ENCODE measurements at regions of chr1 and their contacts with region 1.

Region 1: GRCh38 chr1:246931549-246932365 is at the start of gene AHCTF1:
- DNase-seq: peak; percentile 97
- ATAC-seq: peak; percentile 86
- H3K4me3 ChIP-seq: peak within 1 kb of the TSS; percentile 85 to 96 (median 88)
- H3K4me3 Mint-ChIP-seq: peak within 1 kb of the TSS; percentile 98
- H3K27ac ChIP-seq: peak within 1 kb of the TSS; percentile 87 to 93
- H3K27ac Mint-ChIP-seq: peak within 1 kb of the TSS; percentile 98
- H3K4me1 ChIP-seq: peaks cover 12 to 18% of the 10 kb centered on the region in 2 donors
- H3K4me1 Mint-ChIP-seq: peaks cover 33% of the 10 kb centered on the region
- H3K27me3 ChIP-seq: no peaks in the 10 kb centered on the region
- H3K27me3 Mint-ChIP-seq: no peaks in the 10 kb centered on the region
- CTCF ChIP-seq: no peak
- total RNA-seq, gene AHCTF1: 34.8 and 43.1 TPM in 2 replicates

Region 2: GRCh38 chr1:245448975-245449431 is 1482.8 kb before region 1 on chr1:
- CTCF ChIA-PET with region 1: no interaction called
- POLR2A ChIA-PET with region 1: no interaction called
- intact Hi-C with region 1: no loop called
- DNase-seq: no peak
- ATAC-seq: no peak
- H3K4me3 ChIP-seq: no peak overlapping the region
- H3K4me3 Mint-ChIP-seq: no peak overlapping the region
- H3K27ac ChIP-seq: no peak overlapping the region
- H3K27ac Mint-ChIP-seq: no peak overlapping the region
- H3K4me1 ChIP-seq: no peaks in the 10 kb centered on the region
- H3K4me1 Mint-ChIP-seq: no peaks in the 10 kb centered on the region
- H3K27me3 ChIP-seq: no peaks in the 10 kb centered on the region
- H3K27me3 Mint-ChIP-seq: peaks cover 3% of the 10 kb centered on the region
- CTCF ChIP-seq: no peak

Region 3: DNA sequence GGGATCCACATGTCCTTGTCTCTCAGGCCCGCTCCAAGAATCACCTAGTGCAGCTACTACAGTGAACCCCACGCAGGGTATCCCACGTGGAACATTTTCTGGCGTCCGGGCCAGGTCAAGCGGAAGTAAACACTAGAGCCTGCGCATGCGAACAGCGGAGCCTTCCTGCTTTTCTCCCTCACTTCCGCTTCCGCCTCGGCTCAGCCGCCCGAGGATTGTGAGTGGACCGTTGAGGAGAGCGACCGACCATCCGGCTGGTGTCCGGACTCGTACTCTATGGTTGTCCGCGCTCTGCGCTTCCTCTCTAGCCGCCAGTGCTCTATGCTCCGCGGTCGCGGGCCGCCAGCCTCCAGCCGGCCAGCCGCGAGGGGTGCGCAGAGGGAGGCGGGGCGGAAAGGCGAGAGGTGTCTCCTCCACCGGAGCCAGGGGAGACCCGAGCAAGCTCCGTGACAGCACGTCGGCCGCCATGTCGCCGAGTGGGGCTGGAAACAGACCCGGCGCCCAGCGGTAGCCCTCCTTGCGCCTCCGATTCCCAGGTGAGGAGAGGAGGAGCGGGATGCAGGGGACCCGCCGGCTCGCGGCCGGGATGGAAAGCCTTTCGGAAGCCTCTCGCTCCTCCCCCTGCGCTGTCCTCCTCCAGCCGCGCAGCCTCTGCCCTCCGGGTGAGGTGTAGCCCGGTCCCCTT is 365.5 kb before region 1 on chr1 and contains the starts of genes CNST and TFB2M:
- CTCF ChIA-PET with region 1: no interaction called
- POLR2A ChIA-PET with region 1: no interaction called
- intact Hi-C with region 1: loop called (anchors 2 kb)
- DNase-seq: peak; percentile 98
- ATAC-seq: peak; percentile 90
- H3K4me3 ChIP-seq: peak within 1 kb of the TSS; percentile 70 to 100 (median 95)
- H3K4me3 Mint-ChIP-seq: peak within 1 kb of the TSS; percentile 98
- H3K27ac ChIP-seq: peak within 1 kb of the TSS; percentile 83 to 95
- H3K27ac Mint-ChIP-seq: peak within 1 kb of the TSS; percentile 94
- H3K4me1 ChIP-seq: peaks cover 50 to 53% of the 10 kb centered on the region in 2 donors
- H3K4me1 Mint-ChIP-seq: peaks cover 45% of the 10 kb centered on the region
- H3K27me3 ChIP-seq: no peaks in the 10 kb centered on the region
- H3K27me3 Mint-ChIP-seq: no peaks in the 10 kb centered on the region
- CTCF ChIP-seq: no peak
- total RNA-seq, gene CNST: 54.0 and 54.6 TPM in 2 replicates
- total RNA-seq, gene TFB2M: 11.6 and 14.7 TPM in 2 replicates

Region 4: GRCh38 chr1:246827392-246827791 is 104.4 kb before region 1 on chr1:
- CTCF ChIA-PET with region 1: no interaction called
- POLR2A ChIA-PET with region 1: no interaction called
- intact Hi-C with region 1: no loop called
- DNase-seq: no peak
- ATAC-seq: no peak
- H3K4me3 ChIP-seq: no peak overlapping the region
- H3K4me3 Mint-ChIP-seq: no peak overlapping the region
- H3K27ac ChIP-seq: no peak overlapping the region
- H3K27ac Mint-ChIP-seq: no peak overlapping the region
- H3K4me1 ChIP-seq: no peaks in the 10 kb centered on the region
- H3K4me1 Mint-ChIP-seq: no peaks in the 10 kb centered on the region
- H3K27me3 ChIP-seq: no peaks in the 10 kb centered on the region
- H3K27me3 Mint-ChIP-seq: peaks cover 7% of the 10 kb centered on the region
- CTCF ChIP-seq: no peak

Region 5: DNA sequence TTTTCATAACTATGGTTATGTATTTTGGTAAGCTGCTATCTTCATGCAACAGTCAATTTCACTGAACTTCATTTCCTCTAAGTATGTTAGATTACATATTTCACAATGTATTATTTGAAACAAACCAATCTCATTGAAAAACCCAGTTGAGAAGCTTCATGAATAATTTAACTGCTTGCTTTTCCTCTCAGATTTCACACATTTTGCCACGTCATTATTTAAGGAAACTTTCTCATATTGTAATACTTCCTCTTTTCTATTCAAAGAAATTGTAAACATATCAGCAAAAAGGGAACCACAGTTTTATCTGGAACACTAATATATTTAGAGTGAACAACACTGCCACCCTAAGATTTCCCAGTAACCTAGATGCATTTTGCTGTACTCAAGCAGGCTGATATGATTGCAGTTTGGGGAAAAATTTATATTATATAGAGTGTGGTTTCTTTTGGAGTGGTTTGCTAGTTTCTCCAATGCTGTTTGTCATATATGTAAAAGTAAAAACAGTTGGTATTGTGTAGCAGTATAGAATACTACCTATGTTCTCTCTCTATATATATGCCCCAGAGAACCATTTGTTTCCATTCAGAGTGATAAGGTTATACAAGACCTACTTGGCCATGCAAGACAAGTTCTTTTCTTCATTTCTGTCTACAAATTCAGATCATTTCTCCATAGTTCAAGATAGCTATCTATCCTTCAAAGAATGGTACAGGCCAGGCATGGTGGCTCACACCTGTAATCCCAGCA is 28.4 kb after region 1 on chr1:
- CTCF ChIA-PET with region 1: interaction called, 5 read pairs
- POLR2A ChIA-PET with region 1: no interaction called
- intact Hi-C with region 1: loop called (anchors 1 kb)
- DNase-seq: peak; percentile 65
- ATAC-seq: peak; percentile 76
- H3K4me3 ChIP-seq: peak overlapping the region in 2 of 5 experiments; percentile 6 to 37
- H3K4me3 Mint-ChIP-seq: peak overlapping the region; percentile 66
- H3K27ac ChIP-seq: peak overlapping the region; percentile 2 to 3
- H3K27ac Mint-ChIP-seq: peak overlapping the region; percentile 68
- H3K4me1 ChIP-seq: peaks cover 15 to 23% of the 10 kb centered on the region in 2 donors
- H3K4me1 Mint-ChIP-seq: peaks cover 38% of the 10 kb centered on the region
- H3K27me3 ChIP-seq: no peaks in the 10 kb centered on the region
- H3K27me3 Mint-ChIP-seq: no peaks in the 10 kb centered on the region
- CTCF ChIP-seq: peak; percentile 33

Region 6: GRCh38 chr1:246987083-246987690 is 55.4 kb after region 1 on chr1:
- CTCF ChIA-PET with region 1: no interaction called
- POLR2A ChIA-PET with region 1: no interaction called
- intact Hi-C with region 1: no loop called
- DNase-seq: no peak
- ATAC-seq: no peak
- H3K4me3 ChIP-seq: no peak overlapping the region
- H3K4me3 Mint-ChIP-seq: no peak overlapping the region
- H3K27ac ChIP-seq: no peak overlapping the region
- H3K27ac Mint-ChIP-seq: no peak overlapping the region
- H3K4me1 ChIP-seq: no peaks in the 10 kb centered on the region
- H3K4me1 Mint-ChIP-seq: no peaks in the 10 kb centered on the region
- H3K27me3 ChIP-seq: no peaks in the 10 kb centered on the region
- H3K27me3 Mint-ChIP-seq: no peaks in the 10 kb centered on the region
- CTCF ChIP-seq: no peak

Region 7: DNA sequence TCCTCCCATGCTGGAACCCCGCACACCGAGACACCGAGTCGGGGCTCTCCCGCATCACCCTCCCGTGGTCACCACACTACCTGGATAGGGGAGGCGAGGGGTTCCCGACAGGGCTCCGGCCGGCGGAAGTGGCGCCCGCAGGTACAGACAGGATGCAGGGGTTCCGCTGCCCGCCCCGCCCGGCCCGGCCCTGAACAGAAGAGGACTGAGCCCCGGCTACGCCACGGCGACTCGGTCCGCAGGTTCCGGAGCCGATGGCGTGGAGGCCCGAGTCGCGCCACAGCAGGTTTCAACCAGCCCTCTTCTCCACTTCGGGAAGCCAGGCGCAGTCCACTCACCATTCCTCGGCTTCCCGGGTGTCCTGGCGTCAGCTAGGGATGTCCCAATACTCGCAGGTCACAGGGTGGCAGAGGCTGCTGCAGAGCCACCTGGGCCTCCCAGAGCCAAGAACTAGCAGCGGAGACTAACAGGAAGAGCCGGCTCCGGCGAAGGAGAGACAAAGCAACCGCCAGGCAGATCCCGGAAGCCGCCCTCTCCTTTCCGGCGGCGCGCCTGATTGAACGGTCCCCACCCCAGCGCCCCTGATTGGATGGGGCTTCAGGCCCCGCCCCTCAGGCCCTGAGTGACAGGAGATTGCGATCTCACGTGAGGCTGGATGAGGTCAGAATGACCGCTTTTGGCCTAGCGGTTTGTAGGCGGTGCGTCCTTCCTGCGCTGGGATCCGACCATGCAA is 172.3 kb after region 1 on chr1 and contains the start of gene ZNF669:
- CTCF ChIA-PET with region 1: no interaction called
- POLR2A ChIA-PET with region 1: no interaction called
- intact Hi-C with region 1: loop called (anchors 1 kb)
- DNase-seq: peak; percentile 96
- ATAC-seq: peak; percentile 99
- H3K4me3 ChIP-seq: peak within 1 kb of the TSS; percentile 78 to 98 (median 87)
- H3K4me3 Mint-ChIP-seq: peak within 1 kb of the TSS; percentile 95
- H3K27ac ChIP-seq: peak within 1 kb of the TSS; percentile 80 to 90
- H3K27ac Mint-ChIP-seq: peak within 1 kb of the TSS; percentile 89
- H3K4me1 ChIP-seq: peaks cover 6 to 17% of the 10 kb centered on the region in 2 donors
- H3K4me1 Mint-ChIP-seq: peaks cover 19% of the 10 kb centered on the region
- H3K27me3 ChIP-seq: peaks cover 0 to 14% (median 6%) of the 10 kb centered on the region in 4 experiments
- H3K27me3 Mint-ChIP-seq: peaks cover 23% of the 10 kb centered on the region
- CTCF ChIP-seq: no peak
- total RNA-seq, gene ZNF669: 20.8 and 21.3 TPM in 2 replicates

Region 8: DNA sequence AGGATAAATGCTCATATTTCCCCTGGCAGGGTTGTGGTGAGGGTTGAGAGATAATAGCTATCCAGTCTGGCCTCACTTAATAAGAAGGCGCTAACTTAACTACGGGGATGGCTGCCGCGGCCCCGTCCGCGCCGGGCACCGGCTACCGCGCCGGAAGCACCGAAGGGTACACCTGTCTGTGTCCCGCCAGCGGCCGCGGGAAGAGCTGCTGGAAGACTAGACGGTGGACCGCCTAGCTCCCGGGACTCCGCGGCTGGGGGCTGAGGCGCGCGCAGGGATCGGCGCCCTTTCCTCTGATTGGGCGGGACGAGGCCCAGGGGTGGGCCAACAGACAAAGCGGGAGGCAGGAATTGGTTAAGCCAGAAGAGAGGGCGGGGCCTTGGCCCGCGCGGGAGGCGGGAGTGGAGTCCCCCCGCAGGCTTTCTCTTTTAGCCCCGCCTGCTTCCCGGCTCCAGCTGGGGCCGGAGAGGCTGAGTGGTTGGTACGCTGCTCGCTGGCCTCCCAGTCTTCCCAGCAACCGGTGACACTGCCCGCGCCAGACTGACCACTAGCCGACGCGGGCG is 1906.1 kb after region 1 on chr1 and contains the start of gene ZNF672:
- CTCF ChIA-PET with region 1: no interaction called
- POLR2A ChIA-PET with region 1: no interaction called
- intact Hi-C with region 1: loop called (anchors 5 kb)
- DNase-seq: peak; percentile 94
- ATAC-seq: peak; percentile 82
- H3K4me3 ChIP-seq: peak within 1 kb of the TSS; percentile 65 to 94 (median 92)
- H3K4me3 Mint-ChIP-seq: no peak within 1 kb of the TSS
- H3K27ac ChIP-seq: peak within 1 kb of the TSS; percentile 97 to 99
- H3K27ac Mint-ChIP-seq: no peak within 1 kb of the TSS
- H3K4me1 ChIP-seq: peaks cover 42 to 47% of the 10 kb centered on the region in 2 donors
- H3K4me1 Mint-ChIP-seq: peaks cover 36% of the 10 kb centered on the region
- H3K27me3 ChIP-seq: no peaks in the 10 kb centered on the region
- H3K27me3 Mint-ChIP-seq: no peaks in the 10 kb centered on the region
- CTCF ChIP-seq: no peak
- total RNA-seq, gene ZNF672: 56.3 and 62.2 TPM in 2 replicates